H1 (cell line): ENCODE measurements at regions of chr10 and their contacts with region 1.

Region 1: DNA sequence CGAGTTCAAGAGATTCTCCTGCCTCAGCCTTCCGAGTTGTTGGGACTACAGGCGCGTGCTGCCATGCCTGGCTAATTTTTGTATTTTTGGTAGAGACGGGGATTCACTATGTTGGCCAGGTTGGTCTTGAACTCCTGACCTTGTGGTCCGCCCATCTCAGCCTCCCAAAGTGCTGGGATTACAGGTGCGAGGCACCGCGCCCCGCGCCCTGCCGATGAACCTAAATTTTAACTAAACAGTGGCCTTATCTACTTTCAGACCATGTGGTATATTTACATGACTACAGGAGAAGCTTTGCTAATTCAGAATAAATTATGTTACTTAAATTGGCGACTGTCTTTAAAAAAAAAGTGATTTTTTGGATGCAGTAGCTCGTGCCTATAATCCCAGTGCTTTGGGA is 9.2 kb downstream of the SIRT1 start:
- DNase-seq: no peak
- H3K4me3 ChIP-seq: no peak overlapping the region
- H3K27ac ChIP-seq: no peak overlapping the region
- H3K4me1 ChIP-seq: no peaks in the 10 kb centered on the region
- H3K27me3 ChIP-seq: no peaks in the 10 kb centered on the region
- CTCF ChIP-seq: no peak
- EP300 ChIP-seq: no peak
- POLR2A ChIP-seq: no peak
- RAD21 ChIP-seq: no peak

Region 2: DNA sequence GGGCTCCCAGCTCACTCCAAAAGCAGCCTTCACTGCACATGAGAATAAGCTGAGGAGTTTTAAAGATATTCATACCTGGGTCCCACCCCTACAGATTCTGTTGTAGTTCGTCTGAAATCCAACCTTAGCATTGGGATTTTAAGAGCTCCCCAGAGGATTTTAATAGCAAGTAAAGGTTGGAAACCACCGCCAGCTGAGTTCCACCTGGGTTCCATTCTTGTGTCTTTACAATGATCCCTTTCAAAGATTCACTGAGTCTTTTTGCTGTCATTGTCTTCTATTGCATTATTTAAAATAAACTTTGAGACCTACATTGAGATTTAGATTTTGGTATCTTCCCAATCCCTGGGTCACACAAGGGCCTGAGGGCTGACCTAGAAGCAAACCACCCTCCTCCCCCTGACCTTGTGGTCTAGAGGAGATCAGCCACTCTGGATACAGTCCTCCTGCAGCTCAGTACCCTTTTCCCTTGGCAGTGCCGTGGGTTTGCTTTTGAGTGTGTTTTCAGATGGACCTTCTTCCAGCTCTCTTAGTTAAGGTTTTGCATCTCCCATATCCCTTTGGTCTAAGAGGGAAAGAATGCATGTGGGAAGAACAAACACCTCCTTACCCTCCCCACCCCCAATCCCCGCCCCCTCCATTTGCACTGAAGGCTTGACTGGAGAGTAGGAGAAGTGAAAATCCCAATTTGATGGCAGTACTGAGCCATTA is 31.7 kb before region 1 on chr10:
- CTCF ChIA-PET with region 1: interaction called, 4 read pairs
- POLR2A ChIA-PET with region 1: interaction called, 41 read pairs
- DNase-seq: peak; percentile 59 to 67
- H3K4me3 ChIP-seq: peak overlapping the region in 3 of 4 experiments; percentile 20 to 48 (median 35); a peak in 5 of 8 replicates
- H3K27ac ChIP-seq: peak overlapping the region; percentile 36
- H3K4me1 ChIP-seq: peaks cover 2 to 11% (median 10%) of the 10 kb centered on the region in 4 experiments; a peak in 6 of 7 replicates
- H3K27me3 ChIP-seq: no peaks in the 10 kb centered on the region; a peak in 1 of 7 replicates
- CTCF ChIP-seq: no peak
- EP300 ChIP-seq: peak in 1 of 2 experiments; percentile 5; a peak in 1 of 3 replicates
- POLR2A ChIP-seq: peak; percentile 47 to 61
- RAD21 ChIP-seq: no peak

Region 3: GRCh38 chr10:67912339-67912946 is 18.8 kb after region 1 on chr10:
- CTCF ChIA-PET with region 1: interaction called, 3 read pairs
- POLR2A ChIA-PET with region 1: interaction called, 37 read pairs
- DNase-seq: no peak
- H3K4me3 ChIP-seq: no peak overlapping the region
- H3K27ac ChIP-seq: no peak overlapping the region
- H3K4me1 ChIP-seq: no peaks in the 10 kb centered on the region
- H3K27me3 ChIP-seq: no peaks in the 10 kb centered on the region
- CTCF ChIP-seq: no peak
- EP300 ChIP-seq: no peak
- POLR2A ChIP-seq: no peak
- RAD21 ChIP-seq: no peak